ENCODE measurements at regions of chr11 and their contacts with region 1.

Region 1: GRCh38 chr11:75867775-75868374 is 52.9 kb downstream of the UVRAG start:
- DNase-seq: no peak
- H3K4me3 ChIP-seq: no peak overlapping the region
- H3K27me3 ChIP-seq: no peaks in the 10 kb centered on the region
- CTCF ChIP-seq: peak; percentile 61

Region 2: GRCh38 chr11:75721855-75722668 is 145.8 kb before region 1 on chr11:
- CTCF ChIA-PET with region 1: interaction called, 13 read pairs
- POLR2A ChIA-PET with region 1: no interaction called
- DNase-seq: no peak
- H3K4me3 ChIP-seq: no peak overlapping the region
- H3K27me3 ChIP-seq: peaks cover 2% of the 10 kb centered on the region; the same call in 1 of the 2 replicates
- CTCF ChIP-seq: no peak

Region 3: DNA sequence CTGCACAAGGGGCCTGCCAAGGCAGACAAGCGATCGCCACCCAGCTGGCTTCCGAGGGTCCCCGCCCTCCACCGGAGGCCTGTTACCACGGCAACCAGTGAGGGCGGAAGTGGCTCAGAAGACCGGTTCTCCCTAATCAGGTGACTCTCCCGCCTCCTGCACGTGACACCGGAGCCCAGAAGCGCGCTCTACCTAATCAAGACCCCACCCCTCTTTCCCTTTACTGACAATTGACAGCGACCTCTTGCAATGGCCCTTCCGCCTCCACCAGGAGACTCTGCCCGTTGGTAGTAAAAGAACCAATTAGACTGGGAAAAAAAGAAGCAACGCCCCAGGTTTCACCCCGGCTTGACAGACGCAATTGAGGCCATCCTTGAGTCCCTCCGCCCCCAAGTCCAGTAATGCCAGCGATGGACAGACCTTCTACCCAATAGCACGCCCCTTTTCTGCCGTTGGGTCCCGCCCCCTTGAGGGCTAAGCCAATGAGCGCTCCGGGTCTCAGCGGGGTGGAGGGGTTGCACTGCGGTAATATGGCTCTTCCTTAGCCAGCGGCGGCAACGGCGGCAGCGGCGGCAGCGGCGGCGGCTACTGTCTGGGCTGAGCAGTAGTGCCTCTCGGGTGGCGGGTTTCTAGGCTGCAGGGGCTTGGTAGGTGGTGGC is 53.1 kb before region 1 on chr11 and contains the start of gene UVRAG:
- CTCF ChIA-PET with region 1: interaction called, 17 read pairs
- POLR2A ChIA-PET with region 1: no interaction called
- DNase-seq: peak; percentile 99
- H3K4me3 ChIP-seq: peak within 1 kb of the TSS; percentile 73
- H3K27me3 ChIP-seq: no peaks in the 10 kb centered on the region; the same call in 1 of the 2 replicates
- CTCF ChIP-seq: 0 out of 2 replicates have a peak, but pooled peaks have one; percentile 5
- polyA plus RNA-seq, gene UVRAG: 8.2 and 10.7 TPM in 2 replicates